Activated CD4-positive, alpha-beta T cell treated with anti-CD3 and anti-CD28 coated beads, Interleukin-2, amount 10 ng/mL, durations not matched to agents 24 days and 14 days (primary cell): ENCODE measurements at regions of chr18 and their contacts with region 1.

Region 1: GRCh38 chr18:61893971-61894750 is 1.4 kb upstream of the RNF152 start:
- DNase-seq: peak; percentile 89
- H3K4me3 Mint-ChIP-seq: peak overlapping the region; percentile 84
- H3K27ac Mint-ChIP-seq: peak overlapping the region; percentile 58
- H3K4me1 Mint-ChIP-seq: peaks cover 10% of the 10 kb centered on the region
- H3K27me3 Mint-ChIP-seq: peaks cover 70% of the 10 kb centered on the region

Region 2: DNA sequence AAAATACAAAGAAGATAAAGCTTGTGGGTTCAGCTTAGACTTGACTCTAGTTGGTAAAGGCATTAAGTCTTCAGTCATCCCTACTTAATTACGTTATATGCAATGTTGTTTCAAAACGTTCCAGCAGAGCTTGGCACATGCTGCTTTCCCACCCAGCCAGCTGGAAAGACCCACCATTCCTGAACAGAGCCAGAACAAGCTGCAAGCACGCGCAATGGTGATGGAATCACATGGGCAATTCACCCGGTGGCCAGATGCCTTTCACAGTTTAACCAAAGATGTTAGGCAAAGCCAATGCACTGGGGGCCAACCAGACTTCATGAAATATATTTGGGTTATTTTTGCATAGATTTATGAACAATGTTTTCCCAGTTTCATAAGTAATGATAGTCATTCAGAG is 684.4 kb before region 1 on chr18:
- intact Hi-C with region 1: no loop called
- DNase-seq: no peak
- H3K4me3 Mint-ChIP-seq: no peak overlapping the region
- H3K27ac Mint-ChIP-seq: no peak overlapping the region
- H3K4me1 Mint-ChIP-seq: no peaks in the 10 kb centered on the region
- H3K27me3 Mint-ChIP-seq: no peaks in the 10 kb centered on the region

Region 3: DNA sequence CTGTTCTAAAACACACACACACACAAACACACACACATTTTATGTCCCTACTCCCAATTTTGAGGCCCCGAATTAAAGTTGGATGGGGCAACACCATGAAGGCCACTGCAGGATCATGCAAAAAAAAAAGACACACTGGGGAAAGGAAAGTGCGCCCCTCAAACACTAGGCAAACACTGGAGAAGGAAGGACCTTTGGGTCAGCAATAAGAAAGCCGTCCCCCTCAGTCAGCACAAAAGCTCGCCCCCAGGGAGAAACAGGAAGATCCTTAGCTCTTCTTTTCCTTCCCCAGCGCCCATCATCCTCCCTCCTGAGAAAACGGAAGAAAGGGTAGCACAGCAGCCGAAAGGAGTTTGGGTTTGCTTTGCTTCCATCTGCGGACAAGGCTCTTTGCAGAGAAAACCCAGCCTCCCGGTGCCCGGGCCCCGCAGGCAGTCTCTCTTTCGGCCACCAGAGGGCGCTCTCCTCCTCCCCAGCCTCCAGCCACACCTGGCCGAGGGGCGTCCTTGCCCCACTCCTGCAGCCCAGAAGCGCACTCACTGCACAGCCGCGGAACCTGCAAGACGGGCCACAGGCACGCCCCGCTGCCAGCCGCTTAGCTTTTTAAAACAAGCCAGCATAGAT is 312.5 kb before region 1 on chr18:
- intact Hi-C with region 1: loop called (anchors 5 kb)
- DNase-seq: peak; percentile 88
- H3K4me3 Mint-ChIP-seq: no peak overlapping the region
- H3K27ac Mint-ChIP-seq: no peak overlapping the region
- H3K4me1 Mint-ChIP-seq: peaks cover 2% of the 10 kb centered on the region
- H3K27me3 Mint-ChIP-seq: peaks cover 14% of the 10 kb centered on the region

Region 4: DNA sequence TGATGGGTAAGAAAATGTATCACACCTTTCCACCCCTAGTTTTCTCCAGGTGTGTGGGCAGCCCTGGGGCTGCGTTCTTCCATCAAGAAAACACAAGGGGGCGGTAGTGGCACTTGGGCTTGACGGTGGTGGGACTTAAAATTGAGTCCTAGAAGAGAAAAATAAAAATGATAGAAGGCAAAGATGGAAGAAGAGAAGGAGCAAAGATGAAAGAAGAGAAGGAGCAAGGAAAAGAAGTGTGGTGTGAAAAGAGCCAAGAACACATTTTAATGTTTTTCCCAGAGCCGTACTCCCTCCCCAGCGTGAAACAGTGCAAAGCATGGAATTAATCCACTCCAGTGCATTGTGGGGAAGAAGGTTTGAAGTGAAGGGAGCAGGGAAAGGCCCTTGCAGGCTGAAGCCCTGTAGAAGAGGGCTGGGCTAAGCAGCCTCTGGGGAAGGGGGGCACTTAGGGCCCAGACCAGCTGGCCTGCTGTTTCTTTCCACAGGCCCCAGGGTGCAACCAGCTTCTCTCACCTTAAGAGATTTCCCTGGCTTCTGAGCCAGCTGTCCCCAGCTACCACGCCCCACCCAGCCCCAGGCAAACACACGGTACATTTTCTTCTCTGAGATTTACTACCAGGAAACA is 258.1 kb before region 1 on chr18:
- intact Hi-C with region 1: loop called (anchors 5 kb)
- DNase-seq: peak; percentile 77
- H3K4me3 Mint-ChIP-seq: no peak overlapping the region
- H3K27ac Mint-ChIP-seq: no peak overlapping the region
- H3K4me1 Mint-ChIP-seq: no peaks in the 10 kb centered on the region
- H3K27me3 Mint-ChIP-seq: peaks cover 3% of the 10 kb centered on the region

Region 5: DNA sequence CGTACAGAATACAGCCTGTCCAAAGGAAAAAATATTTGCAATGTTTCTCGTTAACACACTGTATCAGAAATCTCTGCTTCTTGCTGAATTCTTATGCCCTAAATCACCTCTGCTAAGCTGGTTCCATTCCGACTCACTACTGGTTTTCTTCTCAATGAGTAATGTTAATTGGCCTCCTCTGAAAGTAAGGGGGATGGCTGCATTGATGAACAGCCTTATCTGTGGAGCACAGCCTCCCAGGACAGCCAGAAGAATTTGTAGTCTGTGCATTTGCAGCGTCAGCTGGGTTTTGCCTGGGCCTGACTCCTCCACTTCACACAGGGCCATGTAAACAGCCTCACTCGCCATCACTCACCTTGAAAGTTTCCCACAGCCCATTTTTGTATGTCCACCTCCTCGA is 129.1 kb before region 1 on chr18:
- intact Hi-C with region 1: loop called (anchors 10 kb)
- DNase-seq: no peak
- H3K4me3 Mint-ChIP-seq: no peak overlapping the region
- H3K27ac Mint-ChIP-seq: no peak overlapping the region
- H3K4me1 Mint-ChIP-seq: peaks cover 2% of the 10 kb centered on the region
- H3K27me3 Mint-ChIP-seq: peaks cover 29% of the 10 kb centered on the region

Region 6: DNA sequence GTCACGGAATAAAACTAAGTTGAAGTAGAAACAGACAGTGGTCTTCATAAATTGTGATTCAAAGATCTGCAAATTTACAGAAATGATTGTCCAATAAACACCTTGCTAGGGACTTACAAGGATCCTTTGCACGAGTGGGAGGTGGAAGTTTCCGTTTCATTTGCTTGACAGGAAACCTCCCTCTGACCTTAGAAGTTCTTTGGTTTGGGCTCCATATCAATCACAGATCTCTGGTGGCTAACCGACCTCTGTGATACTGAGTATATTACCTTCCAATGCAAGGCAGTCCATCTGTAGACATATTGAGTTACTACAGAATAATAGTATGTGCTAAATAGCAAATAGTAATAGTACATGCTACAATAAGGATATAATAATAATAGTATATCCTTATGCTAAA is 32.4 kb after region 1 on chr18:
- intact Hi-C with region 1: loop called (anchors 2 kb)
- DNase-seq: peak; percentile 78
- H3K4me3 Mint-ChIP-seq: no peak overlapping the region
- H3K27ac Mint-ChIP-seq: peak overlapping the region; percentile 81
- H3K4me1 Mint-ChIP-seq: peaks cover 25% of the 10 kb centered on the region
- H3K27me3 Mint-ChIP-seq: peaks cover 4% of the 10 kb centered on the region